ENCODE measurements at regions of chr3 and their contacts with region 1.

Region 1: DNA sequence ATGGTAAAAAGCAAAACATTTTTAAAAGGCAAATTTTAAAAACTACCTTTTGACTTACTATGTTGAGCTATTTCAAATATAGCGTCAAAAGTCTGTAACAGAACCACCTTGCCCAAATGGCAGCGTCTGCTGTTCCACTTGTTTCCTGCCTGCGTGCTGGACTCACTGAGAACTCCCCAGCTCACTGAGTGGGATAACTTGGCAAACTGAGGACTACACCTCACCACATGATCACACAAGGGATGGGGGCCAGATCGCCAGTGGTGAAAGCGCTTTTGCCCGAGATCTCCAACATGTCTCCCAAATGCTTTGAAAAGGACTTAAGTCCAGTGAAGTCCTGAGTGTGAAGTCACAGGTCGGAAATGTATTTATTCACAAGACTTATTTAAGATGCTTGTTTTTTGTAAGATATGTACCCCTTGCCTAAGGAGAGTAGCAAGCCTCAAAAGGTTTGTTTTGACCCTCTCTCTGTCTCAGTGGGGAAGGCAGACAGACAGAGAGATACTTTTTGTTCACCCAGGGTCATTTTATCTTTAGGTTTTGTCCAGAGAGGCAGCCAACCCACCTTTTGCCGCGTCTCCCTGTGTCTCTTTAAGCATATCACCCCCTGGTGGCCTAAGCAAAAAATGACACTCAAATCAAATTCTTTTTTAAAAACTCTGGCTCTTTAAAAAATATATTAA is 192.6 kb downstream of the PDZRN3 start:
- DNase-seq: no peak
- ATAC-seq: peak in 1 of 8 donors; percentile 31
- H3K4me3 ChIP-seq: no peak overlapping the region
- H3K27ac ChIP-seq: no peak overlapping the region
- H3K4me1 ChIP-seq: peaks cover 0 to 45% (median 17%) of the 10 kb centered on the region in 9 donors
- H3K27me3 ChIP-seq: no peaks in the 10 kb centered on the region
- CTCF ChIP-seq: peak; percentile 41 to 72 (median 65)

Region 2: DNA sequence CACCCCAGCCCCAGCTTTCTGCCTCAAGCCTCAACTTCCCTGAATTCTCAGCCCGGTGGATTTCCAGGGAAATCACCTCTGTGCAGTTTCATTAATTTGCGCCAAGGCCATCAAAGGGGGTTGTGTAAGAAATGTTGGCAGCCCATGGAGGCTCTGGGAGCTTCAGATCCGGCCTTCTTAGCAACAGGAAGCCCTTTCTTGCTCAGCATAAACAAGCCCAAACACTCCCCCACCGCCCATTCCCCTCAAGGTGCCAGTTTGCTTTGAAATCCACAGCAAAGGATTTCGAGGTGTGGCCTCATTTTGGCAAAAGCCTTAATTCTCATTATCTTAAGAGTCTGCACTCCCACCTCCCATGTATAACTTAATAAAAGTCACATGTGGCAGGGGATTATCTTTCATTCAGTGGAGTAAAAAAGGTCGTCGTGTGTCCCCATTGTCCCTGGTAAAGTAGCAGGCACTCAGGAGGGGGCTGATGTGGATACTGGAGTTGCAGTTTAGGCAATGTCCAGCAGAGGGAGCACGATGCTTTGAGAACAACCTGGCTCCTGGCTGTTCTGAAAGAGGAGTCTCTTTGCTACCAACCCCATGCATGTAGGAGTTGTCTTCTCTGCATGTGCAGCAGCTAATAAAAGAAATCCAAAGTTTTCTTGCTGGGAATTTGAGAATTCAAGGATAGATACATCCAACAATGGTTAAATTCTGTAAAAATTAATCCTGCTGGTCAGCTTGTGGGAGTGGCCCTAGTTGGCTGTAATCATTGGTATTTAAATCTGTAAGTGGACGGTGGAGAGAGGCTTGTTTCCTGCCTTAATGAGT is 331.2 kb before region 1 on chr3:
- intact Hi-C with region 1: loop called (anchors 2 to 10 kb)
- DNase-seq: peak; percentile 43 to 84
- ATAC-seq: peak; percentile 66 to 91 (median 86)
- H3K4me3 ChIP-seq: no peak overlapping the region
- H3K27ac ChIP-seq: no peak overlapping the region
- H3K4me1 ChIP-seq: peaks cover 0 to 8% (median 0%) of the 10 kb centered on the region in 9 donors
- H3K27me3 ChIP-seq: no peaks in the 10 kb centered on the region
- CTCF ChIP-seq: peak; percentile 82 to 95 (median 93)

Region 3: GRCh38 chr3:73107676-73108187 is 324.4 kb before region 1 on chr3:
- intact Hi-C with region 1: loop called in 8 of 10 experiments (anchors 5 to 10 kb)
- DNase-seq: no peak
- ATAC-seq: no peak
- H3K4me3 ChIP-seq: no peak overlapping the region
- H3K27ac ChIP-seq: no peak overlapping the region
- H3K4me1 ChIP-seq: no peaks in the 10 kb centered on the region
- H3K27me3 ChIP-seq: no peaks in the 10 kb centered on the region
- CTCF ChIP-seq: no peak

Region 4: GRCh38 chr3:73480187-73480672 is 48.1 kb after region 1 on chr3:
- intact Hi-C with region 1: no loop called
- DNase-seq: no peak
- ATAC-seq: peak in 7 of 8 donors; percentile 46 to 69 (median 62)
- H3K4me3 ChIP-seq: no peak overlapping the region
- H3K27ac ChIP-seq: peak overlapping the region in 6 of 10 donors; percentile 12 to 62 (median 44)
- H3K4me1 ChIP-seq: peaks cover 0 to 49% (median 46%) of the 10 kb centered on the region in 9 donors
- H3K27me3 ChIP-seq: peaks cover 0 to 5% (median 0%) of the 10 kb centered on the region in 7 donors
- CTCF ChIP-seq: no peak

Region 5: DNA sequence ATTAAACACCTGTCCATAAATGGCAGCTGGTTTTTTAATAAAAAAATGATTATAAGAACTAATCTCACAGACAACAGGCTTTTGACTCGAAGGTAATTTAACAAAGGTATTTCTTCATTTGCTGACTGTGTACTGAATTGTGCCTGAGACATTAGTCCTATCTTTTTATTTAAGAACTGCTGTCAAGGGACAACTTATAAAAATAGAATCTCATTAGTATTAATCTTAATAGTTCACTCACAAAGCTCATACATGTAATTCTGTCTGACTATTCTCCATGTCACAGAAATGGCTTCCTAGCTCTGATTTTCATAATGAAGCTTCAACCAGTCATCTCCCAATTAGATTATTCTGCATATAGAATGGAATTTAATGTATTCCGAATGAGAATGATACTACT is 469.5 kb after region 1 on chr3:
- intact Hi-C with region 1: no loop called
- DNase-seq: no peak
- ATAC-seq: no peak
- H3K4me3 ChIP-seq: no peak overlapping the region
- H3K27ac ChIP-seq: no peak overlapping the region
- H3K4me1 ChIP-seq: no peaks in the 10 kb centered on the region
- H3K27me3 ChIP-seq: peaks cover 0 to 4% (median 0%) of the 10 kb centered on the region in 7 donors
- CTCF ChIP-seq: no peak

Measured in heart right ventricle (tissue), 16 donors.